ENCODE measurements at regions of chr6 and their contacts with region 1.

Region 1: DNA sequence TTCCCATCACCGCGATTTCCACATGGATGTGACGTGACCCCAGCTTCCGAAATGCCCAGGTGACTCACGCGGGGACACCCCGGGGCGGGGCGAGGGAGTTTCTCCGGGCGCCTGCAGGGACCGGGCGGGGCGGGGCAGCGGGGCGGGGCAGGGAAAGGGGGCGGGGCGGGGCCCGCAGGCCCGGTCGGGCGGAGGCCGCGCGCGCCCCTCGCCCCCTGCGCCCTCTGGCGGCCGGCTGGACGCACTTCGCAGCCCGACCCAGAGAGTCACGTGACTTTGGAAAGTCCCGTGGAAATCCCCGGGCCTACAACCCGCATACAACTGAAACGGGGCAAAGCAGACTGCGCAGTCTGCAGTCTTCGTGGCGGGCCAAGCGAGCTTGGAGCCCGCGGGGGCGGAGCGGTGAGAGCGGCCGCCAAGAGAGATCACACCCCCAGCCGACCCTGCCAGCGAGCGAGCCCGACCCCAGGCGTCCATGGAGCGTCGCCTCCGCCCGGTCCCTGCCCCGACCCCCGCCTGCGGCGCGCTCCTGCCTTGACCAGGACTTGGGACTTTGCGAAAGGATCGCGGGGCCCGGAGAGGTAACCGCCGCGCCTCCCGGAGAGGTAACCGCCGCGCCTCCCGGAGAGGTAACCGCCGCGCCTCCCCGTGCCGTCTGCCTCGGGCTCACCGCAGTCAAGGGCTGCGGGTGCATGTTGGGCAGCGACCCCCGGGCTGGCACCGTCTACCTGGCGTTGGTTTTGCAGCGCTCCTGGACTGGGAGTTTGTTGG is at the start of gene TNFAIP3:
- DNase-seq: peak; percentile 94 to 99 (median 98)
- ATAC-seq: peak; percentile 63
- H3K4me3 ChIP-seq: peak within 1 kb of the TSS; percentile 63
- H3K27ac ChIP-seq: peak within 1 kb of the TSS; percentile 96
- H3K4me1 ChIP-seq: peaks cover 34 to 66% of the 10 kb centered on the region in 2 experiments
- H3K27me3 ChIP-seq: no peaks in the 10 kb centered on the region
- CTCF ChIP-seq: peak; percentile 65 to 87 (median 82)
- EP300 ChIP-seq: no peak
- POLR2A ChIP-seq: no peak
- RAD21 ChIP-seq: peak; percentile 84 to 88
- polyA plus RNA-seq, gene TNFAIP3: 0.79 to 1.3 TPM

Region 2: DNA sequence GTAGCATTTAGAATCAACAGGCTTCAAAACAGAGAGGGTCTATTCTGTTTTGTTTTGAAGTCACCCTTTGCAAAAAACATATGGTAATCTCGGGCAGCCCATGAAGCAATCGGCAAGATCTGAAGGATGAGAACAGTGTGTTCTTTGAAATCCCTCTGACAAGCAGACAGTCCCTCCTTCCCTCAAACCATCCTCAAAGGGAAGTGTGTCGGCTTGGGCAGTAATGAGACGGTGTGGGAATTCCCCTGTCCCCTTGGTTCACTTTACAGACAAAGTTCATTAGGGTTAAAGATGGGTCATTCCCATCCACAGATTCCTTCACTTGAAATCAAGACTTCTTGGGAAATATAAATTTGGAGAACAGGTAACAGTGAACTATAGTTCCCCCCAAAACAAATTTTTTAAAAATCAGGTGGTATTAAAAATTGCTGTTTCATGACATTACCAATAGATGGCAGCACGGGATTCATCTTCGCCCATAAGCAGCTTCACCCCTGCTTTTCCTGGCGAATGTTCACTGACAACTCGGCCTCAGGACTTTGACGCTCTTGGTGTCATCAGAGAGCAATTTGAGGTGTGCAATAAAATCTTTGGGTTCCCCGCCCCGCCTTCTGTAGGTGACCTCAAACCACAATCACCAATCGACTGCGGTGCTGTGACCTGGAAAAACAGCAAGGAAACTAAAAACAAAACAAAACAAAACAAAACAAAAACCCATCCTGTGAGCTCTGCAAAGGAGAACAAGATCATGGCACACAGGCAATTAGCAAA is 159.3 kb before region 1 on chr6:
- CTCF ChIA-PET with region 1: interaction called, 13 read pairs
- POLR2A ChIA-PET with region 1: interaction called, 8 read pairs
- in situ Hi-C with region 1: loop called (anchors 5 kb)
- intact Hi-C with region 1: loop called (anchors 1 kb)
- DNase-seq: peak; percentile 32 to 84 (median 60)
- ATAC-seq: peak; percentile 70
- H3K4me3 ChIP-seq: no peak overlapping the region
- H3K27ac ChIP-seq: no peak overlapping the region
- H3K4me1 ChIP-seq: peaks cover 0 to 10% of the 10 kb centered on the region in 2 experiments; a peak in 1 of 5 replicates
- H3K27me3 ChIP-seq: no peaks in the 10 kb centered on the region
- CTCF ChIP-seq: peak; percentile 83 to 98 (median 89)
- EP300 ChIP-seq: no peak
- POLR2A ChIP-seq: no peak
- RAD21 ChIP-seq: peak; percentile 98 to 99

Region 3: DNA sequence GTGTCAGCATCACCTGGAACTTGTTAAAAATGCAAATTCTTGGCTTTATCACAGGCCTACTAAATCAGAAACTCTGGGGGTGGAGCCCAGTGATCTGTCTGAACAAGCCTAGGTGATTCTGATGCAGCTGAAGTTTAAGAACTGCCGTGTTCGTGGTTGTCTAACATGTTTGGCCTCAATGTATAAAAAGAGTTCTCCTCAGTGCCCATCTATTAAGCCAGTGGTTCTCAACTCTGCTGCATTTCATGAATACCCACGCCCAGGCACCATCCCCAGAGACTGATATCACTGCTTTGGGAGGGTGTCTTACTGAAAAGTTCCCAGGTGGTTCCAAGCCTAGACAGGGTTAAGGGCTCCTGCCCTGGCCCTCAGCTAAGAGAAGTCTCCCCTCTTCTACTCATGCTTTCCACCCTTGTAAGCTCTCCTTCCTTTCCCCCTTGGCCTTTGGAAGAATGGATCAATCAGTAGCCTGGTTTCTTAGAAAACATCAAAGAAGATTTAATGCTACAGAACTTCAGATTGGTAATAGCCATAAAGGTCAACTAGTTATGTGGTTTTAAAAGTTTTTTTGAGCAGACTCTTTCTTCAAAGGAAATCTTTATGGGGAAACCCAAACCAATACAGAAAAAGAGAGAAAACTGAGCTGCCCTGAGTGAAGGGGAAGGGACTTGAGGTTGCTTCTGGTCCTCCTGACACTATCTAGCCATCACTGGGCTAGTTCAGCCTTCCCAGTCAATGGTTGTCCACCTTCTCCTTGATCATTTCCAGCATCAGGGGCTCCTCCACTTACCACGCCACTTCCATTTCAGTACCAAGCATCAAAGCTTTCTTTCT is 38.9 kb before region 1 on chr6:
- CTCF ChIA-PET with region 1: no interaction called
- POLR2A ChIA-PET with region 1: interaction called, 5 read pairs
- in situ Hi-C with region 1: no loop called
- intact Hi-C with region 1: loop called (anchors 5 kb)
- DNase-seq: no peak
- ATAC-seq: no peak
- H3K4me3 ChIP-seq: no peak overlapping the region
- H3K27ac ChIP-seq: no peak overlapping the region
- H3K4me1 ChIP-seq: peaks cover 6 to 44% of the 10 kb centered on the region in 2 experiments; a peak in 4 of 5 replicates
- H3K27me3 ChIP-seq: no peaks in the 10 kb centered on the region
- CTCF ChIP-seq: no peak
- EP300 ChIP-seq: no peak
- POLR2A ChIP-seq: no peak
- RAD21 ChIP-seq: no peak

Region 4: DNA sequence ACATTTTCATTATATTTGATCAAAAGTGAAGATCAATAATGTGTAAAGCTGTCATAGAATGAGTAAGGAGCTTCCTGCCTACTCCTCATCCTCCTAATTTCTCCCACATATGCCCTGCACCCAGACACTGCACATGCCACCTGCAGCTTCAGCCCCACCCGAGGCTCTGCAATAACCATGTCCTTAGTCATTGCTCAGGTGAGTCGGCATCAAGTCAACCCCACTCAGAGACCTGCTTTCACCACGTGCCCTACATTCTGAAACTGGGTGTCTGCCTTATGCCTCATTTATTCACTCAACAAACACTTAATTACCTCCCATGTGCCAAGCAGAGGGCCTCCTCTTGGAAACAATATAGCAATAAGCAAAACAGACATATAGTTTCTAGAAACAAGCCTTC is 15.4 kb before region 1 on chr6:
- CTCF ChIA-PET with region 1: no interaction called
- POLR2A ChIA-PET with region 1: interaction called, 16 read pairs
- in situ Hi-C with region 1: no loop called
- intact Hi-C with region 1: no loop called
- DNase-seq: no peak
- ATAC-seq: peak; percentile 18; the same call in 1 of the 3 replicates
- H3K4me3 ChIP-seq: no peak overlapping the region
- H3K27ac ChIP-seq: no peak overlapping the region
- H3K4me1 ChIP-seq: peaks cover 7 to 36% of the 10 kb centered on the region in 2 experiments; a peak in 4 of 5 replicates
- H3K27me3 ChIP-seq: no peaks in the 10 kb centered on the region
- CTCF ChIP-seq: no peak
- EP300 ChIP-seq: no peak
- POLR2A ChIP-seq: no peak
- RAD21 ChIP-seq: no peak

Region 5: DNA sequence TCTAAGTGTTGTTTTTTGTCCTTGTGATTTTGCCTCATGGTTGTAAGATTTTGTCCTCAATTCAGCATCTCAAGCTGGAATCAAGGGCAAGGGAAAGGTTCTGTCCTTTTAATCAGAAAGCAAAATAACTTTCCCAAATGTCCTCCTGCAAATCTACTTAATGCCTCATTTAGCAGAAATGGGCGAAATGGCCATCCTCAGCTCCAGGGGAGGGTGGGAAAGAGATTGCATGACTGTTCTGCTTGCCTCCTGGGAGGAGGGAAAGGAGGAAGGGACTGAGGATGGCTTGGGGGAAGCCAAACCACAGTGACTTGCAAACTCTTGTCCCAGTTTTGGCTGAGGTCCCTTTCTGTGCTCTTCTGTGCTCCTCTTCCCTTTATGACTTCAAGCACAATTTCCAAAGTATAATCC is 43.3 kb after region 1 on chr6:
- CTCF ChIA-PET with region 1: no interaction called
- POLR2A ChIA-PET with region 1: interaction called, 4 read pairs
- in situ Hi-C with region 1: no loop called
- intact Hi-C with region 1: loop called (anchors 2 kb)
- DNase-seq: peak; percentile 59 to 95 (median 72)
- ATAC-seq: peak; percentile 84
- H3K4me3 ChIP-seq: no peak overlapping the region
- H3K27ac ChIP-seq: peak overlapping the region; percentile 71
- H3K4me1 ChIP-seq: peaks cover 16 to 71% of the 10 kb centered on the region in 2 experiments
- H3K27me3 ChIP-seq: no peaks in the 10 kb centered on the region
- CTCF ChIP-seq: no peak
- EP300 ChIP-seq: peak; percentile 87
- POLR2A ChIP-seq: no peak
- RAD21 ChIP-seq: peak in 1 of 2 experiments; percentile 19; a peak in 3 of 4 replicates

Region 6: DNA sequence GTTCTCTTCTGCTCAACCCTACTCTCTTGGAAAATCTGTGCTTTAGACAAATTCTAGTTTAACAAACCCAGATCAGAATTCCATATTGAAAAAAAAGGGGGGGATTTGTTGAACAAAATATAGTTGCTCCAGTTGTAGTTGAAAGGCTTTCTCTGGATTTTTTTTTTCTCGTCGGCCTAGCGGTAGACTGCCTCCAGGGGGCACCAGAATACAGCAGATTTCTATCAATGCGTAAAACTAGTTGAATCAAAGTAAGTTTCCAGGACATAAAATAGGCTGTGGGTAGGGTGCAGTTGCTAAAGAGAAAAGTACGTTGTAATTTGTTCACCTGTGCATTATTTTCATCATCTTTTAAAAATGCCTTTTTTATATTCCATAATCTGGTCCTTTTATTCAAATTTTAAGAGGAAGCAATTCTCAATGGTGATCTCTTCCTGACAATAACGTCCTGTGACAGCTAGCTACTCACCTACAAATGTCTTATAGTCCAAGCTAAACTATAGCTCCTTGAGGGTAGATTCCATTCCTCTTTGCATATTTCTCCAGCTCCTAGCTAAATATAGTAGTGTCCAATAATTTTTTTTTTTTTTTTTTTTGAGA is 134.8 kb after region 1 on chr6:
- CTCF ChIA-PET with region 1: interaction called, 3 read pairs
- POLR2A ChIA-PET with region 1: no interaction called
- in situ Hi-C with region 1: no loop called
- intact Hi-C with region 1: loop called (anchors 2 kb)
- DNase-seq: peak; percentile 48 to 74 (median 58)
- ATAC-seq: peak; percentile 60
- H3K4me3 ChIP-seq: no peak overlapping the region
- H3K27ac ChIP-seq: no peak overlapping the region
- H3K4me1 ChIP-seq: no peaks in the 10 kb centered on the region
- H3K27me3 ChIP-seq: peaks cover 4 to 7% of the 10 kb centered on the region in 2 experiments; a peak in 2 of 5 replicates
- CTCF ChIP-seq: peak; percentile 82 to 94 (median 86)
- EP300 ChIP-seq: no peak
- POLR2A ChIP-seq: no peak
- RAD21 ChIP-seq: peak; percentile 77 to 84